ENCODE measurements at regions of chr4 and their contacts with region 1.

Region 1: DNA sequence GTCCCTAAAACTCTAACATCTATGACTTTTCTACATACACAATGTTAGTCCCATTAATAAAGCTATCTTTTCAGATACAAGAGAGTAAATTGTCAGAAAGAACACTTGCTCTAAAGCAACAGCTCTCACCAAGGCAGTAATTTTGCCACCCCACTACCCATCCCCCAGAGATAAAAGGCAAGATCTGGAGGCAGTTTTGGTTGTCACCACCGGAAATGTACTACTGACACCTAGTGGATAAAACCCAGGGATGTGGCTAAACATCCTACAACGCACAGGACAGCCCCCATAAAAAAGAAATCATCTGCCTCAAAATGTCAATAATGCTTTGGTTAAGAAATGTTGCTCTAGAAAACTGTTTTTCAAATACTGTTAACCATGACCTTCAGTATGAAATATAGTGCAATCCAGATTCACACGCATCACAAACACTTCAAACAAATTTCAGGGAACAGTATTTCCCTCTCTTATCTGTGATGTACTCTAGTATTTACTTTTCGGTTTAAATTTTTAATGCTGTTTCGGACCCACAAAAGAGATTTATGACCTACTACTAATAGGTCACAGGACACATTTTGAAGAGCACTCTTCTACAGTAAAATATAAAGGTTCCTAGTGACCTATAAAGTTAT is 5.1 kb downstream of the FBXL5 start:
- DNase-seq: peak; percentile 11 to 83 (median 79)
- ATAC-seq: peak; percentile 92
- H3K4me3 ChIP-seq: no peak overlapping the region
- H3K4me3 Mint-ChIP-seq: peak overlapping the region; percentile 53 to 74 (median 68)
- H3K27ac ChIP-seq: no peak overlapping the region
- H3K27ac Mint-ChIP-seq: peak overlapping the region in 8 of 9 donors; percentile 9 to 71 (median 54)
- H3K4me1 ChIP-seq: peaks cover 36 to 46% of the 10 kb centered on the region in 2 donors
- H3K4me1 Mint-ChIP-seq: peaks cover 39 to 85% (median 77%) of the 10 kb centered on the region in 7 donors
- H3K27me3 ChIP-seq: no peaks in the 10 kb centered on the region
- H3K27me3 Mint-ChIP-seq: no peaks in the 10 kb centered on the region

Region 2: GRCh38 chr4:15238720-15239119 is 411.3 kb before region 1 on chr4:
- CTCF ChIA-PET with region 1: interaction called, 3 read pairs
- POLR2A ChIA-PET with region 1: no interaction called
- intact Hi-C with region 1: loop called (anchors 1 kb)
- DNase-seq: peak in 5 of 9 donors; percentile 24 to 43 (median 32)
- ATAC-seq: peak; percentile 80
- H3K4me3 ChIP-seq: no peak overlapping the region
- H3K4me3 Mint-ChIP-seq: no peak overlapping the region
- H3K27ac ChIP-seq: no peak overlapping the region
- H3K27ac Mint-ChIP-seq: no peak overlapping the region
- H3K4me1 ChIP-seq: peaks cover 0 to 8% of the 10 kb centered on the region in 2 donors
- H3K4me1 Mint-ChIP-seq: peaks cover 9 to 14% (median 11%) of the 10 kb centered on the region in 7 donors
- H3K27me3 ChIP-seq: no peaks in the 10 kb centered on the region
- H3K27me3 Mint-ChIP-seq: no peaks in the 10 kb centered on the region

Region 3: GRCh38 chr4:15410750-15411149 is 239.3 kb before region 1 on chr4:
- CTCF ChIA-PET with region 1: interaction called, 3 read pairs
- POLR2A ChIA-PET with region 1: interaction called, 3 read pairs
- intact Hi-C with region 1: loop called in 1 of 2 experiments (anchors 2 kb)
- DNase-seq: peak in 6 of 9 donors; percentile 30 to 56 (median 42)
- ATAC-seq: peak; percentile 71
- H3K4me3 ChIP-seq: peak overlapping the region; percentile 41
- H3K4me3 Mint-ChIP-seq: peak overlapping the region; percentile 43 to 82 (median 70)
- H3K27ac ChIP-seq: peak overlapping the region; percentile 41
- H3K27ac Mint-ChIP-seq: peak overlapping the region in 8 of 9 donors; percentile 73 to 93 (median 85)
- H3K4me1 ChIP-seq: peaks cover 12 to 46% of the 10 kb centered on the region in 2 donors
- H3K4me1 Mint-ChIP-seq: peaks cover 25 to 68% (median 63%) of the 10 kb centered on the region in 7 donors
- H3K27me3 ChIP-seq: no peaks in the 10 kb centered on the region
- H3K27me3 Mint-ChIP-seq: peaks cover 0 to 3% (median 0%) of the 10 kb centered on the region in 5 donors

Region 4: GRCh38 chr4:15479089-15479912 is 170.7 kb before region 1 on chr4:
- CTCF ChIA-PET with region 1: interaction called, 4 read pairs
- POLR2A ChIA-PET with region 1: no interaction called
- intact Hi-C with region 1: loop called (anchors 1 kb)
- DNase-seq: peak in 1 of 9 donors; percentile 4
- ATAC-seq: no peak
- H3K4me3 ChIP-seq: no peak overlapping the region
- H3K4me3 Mint-ChIP-seq: no peak overlapping the region
- H3K27ac ChIP-seq: no peak overlapping the region
- H3K27ac Mint-ChIP-seq: no peak overlapping the region
- H3K4me1 ChIP-seq: no peaks in the 10 kb centered on the region
- H3K4me1 Mint-ChIP-seq: no peaks in the 10 kb centered on the region
- H3K27me3 ChIP-seq: no peaks in the 10 kb centered on the region
- H3K27me3 Mint-ChIP-seq: peaks cover 0 to 6% (median 0%) of the 10 kb centered on the region in 5 donors

Region 5: GRCh38 chr4:15636835-15637234 is 13.2 kb before region 1 on chr4:
- CTCF ChIA-PET with region 1: interaction called, 5 read pairs
- POLR2A ChIA-PET with region 1: interaction called, 3 read pairs
- intact Hi-C with region 1: loop called in 1 of 2 experiments (anchors 1 kb)
- DNase-seq: no peak
- ATAC-seq: no peak
- H3K4me3 ChIP-seq: no peak overlapping the region
- H3K4me3 Mint-ChIP-seq: no peak overlapping the region
- H3K27ac ChIP-seq: no peak overlapping the region
- H3K27ac Mint-ChIP-seq: no peak overlapping the region
- H3K4me1 ChIP-seq: no peaks in the 10 kb centered on the region
- H3K4me1 Mint-ChIP-seq: peaks cover 0 to 25% (median 10%) of the 10 kb centered on the region in 7 donors
- H3K27me3 ChIP-seq: no peaks in the 10 kb centered on the region
- H3K27me3 Mint-ChIP-seq: no peaks in the 10 kb centered on the region

Region 6: GRCh38 chr4:15956179-15956850 is 306.3 kb after region 1 on chr4:
- CTCF ChIA-PET with region 1: no interaction called
- POLR2A ChIA-PET with region 1: no interaction called
- intact Hi-C with region 1: loop called (anchors 1 to 5 kb)
- DNase-seq: peak; percentile 44 to 73 (median 65)
- ATAC-seq: peak; percentile 98
- H3K4me3 ChIP-seq: no peak overlapping the region
- H3K4me3 Mint-ChIP-seq: no peak overlapping the region
- H3K27ac ChIP-seq: no peak overlapping the region
- H3K27ac Mint-ChIP-seq: no peak overlapping the region
- H3K4me1 ChIP-seq: no peaks in the 10 kb centered on the region
- H3K4me1 Mint-ChIP-seq: peaks cover 0 to 7% (median 0%) of the 10 kb centered on the region in 7 donors
- H3K27me3 ChIP-seq: no peaks in the 10 kb centered on the region
- H3K27me3 Mint-ChIP-seq: peaks cover 0 to 13% (median 0%) of the 10 kb centered on the region in 5 donors

Measured in naive thymus-derived CD4-positive, alpha-beta T cell (primary cell).